Activated naive CD4-positive, alpha-beta T cell treated with anti-CD3 and anti-CD28 coated beads for 36 hours (primary cell): ENCODE measurements at regions of chr20 and their contacts with region 1.

Region 1: GRCh38 chr20:35329435-35330139 is 37.4 kb upstream of the FAM83C start:
- DNase-seq: peak; percentile 81
- H3K4me3 Mint-ChIP-seq: no peak overlapping the region
- H3K27ac Mint-ChIP-seq: no peak overlapping the region
- H3K4me1 Mint-ChIP-seq: peaks cover 42% of the 10 kb centered on the region
- H3K27me3 Mint-ChIP-seq: no peaks in the 10 kb centered on the region

Region 2: GRCh38 chr20:35166242-35166830 is 163.3 kb before region 1 on chr20:
- CTCF ChIA-PET with region 1: no interaction called
- intact Hi-C with region 1: no loop called
- DNase-seq: no peak
- H3K4me3 Mint-ChIP-seq: no peak overlapping the region
- H3K27ac Mint-ChIP-seq: no peak overlapping the region
- H3K4me1 Mint-ChIP-seq: peaks cover 10% of the 10 kb centered on the region
- H3K27me3 Mint-ChIP-seq: no peaks in the 10 kb centered on the region

Region 3: DNA sequence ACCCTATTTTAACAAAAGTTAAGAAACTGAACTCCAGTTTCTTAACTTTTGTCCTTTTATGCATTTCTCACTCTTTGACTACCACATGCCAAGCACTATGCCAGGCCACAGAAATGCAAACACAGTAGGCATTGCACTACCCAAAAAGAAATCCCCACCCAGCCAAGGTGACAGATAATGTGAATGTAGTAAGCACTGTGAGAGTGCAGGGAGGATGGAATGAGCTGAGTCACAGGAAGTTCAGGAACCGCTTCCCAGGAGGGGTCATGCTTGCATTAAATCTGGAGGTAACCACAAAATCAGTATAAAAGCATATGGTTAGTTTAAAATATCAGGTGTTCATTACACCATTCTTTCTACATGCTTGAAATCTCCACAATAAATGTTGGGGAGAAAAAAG is 17.2 kb before region 1 on chr20:
- CTCF ChIA-PET with region 1: interaction called, 101 read pairs
- intact Hi-C with region 1: loop called (anchors 1 kb)
- DNase-seq: peak; percentile 69
- H3K4me3 Mint-ChIP-seq: no peak overlapping the region
- H3K27ac Mint-ChIP-seq: peak overlapping the region; percentile 80
- H3K4me1 Mint-ChIP-seq: peaks cover 52% of the 10 kb centered on the region
- H3K27me3 Mint-ChIP-seq: no peaks in the 10 kb centered on the region

Region 4: GRCh38 chr20:35490736-35491181 is 161.2 kb after region 1 on chr20:
- CTCF ChIA-PET with region 1: no interaction called
- intact Hi-C with region 1: no loop called
- DNase-seq: peak; percentile 80
- H3K4me3 Mint-ChIP-seq: peak overlapping the region; percentile 98
- H3K27ac Mint-ChIP-seq: peak overlapping the region; percentile 97
- H3K4me1 Mint-ChIP-seq: peaks cover 42% of the 10 kb centered on the region
- H3K27me3 Mint-ChIP-seq: no peaks in the 10 kb centered on the region

Region 5: DNA sequence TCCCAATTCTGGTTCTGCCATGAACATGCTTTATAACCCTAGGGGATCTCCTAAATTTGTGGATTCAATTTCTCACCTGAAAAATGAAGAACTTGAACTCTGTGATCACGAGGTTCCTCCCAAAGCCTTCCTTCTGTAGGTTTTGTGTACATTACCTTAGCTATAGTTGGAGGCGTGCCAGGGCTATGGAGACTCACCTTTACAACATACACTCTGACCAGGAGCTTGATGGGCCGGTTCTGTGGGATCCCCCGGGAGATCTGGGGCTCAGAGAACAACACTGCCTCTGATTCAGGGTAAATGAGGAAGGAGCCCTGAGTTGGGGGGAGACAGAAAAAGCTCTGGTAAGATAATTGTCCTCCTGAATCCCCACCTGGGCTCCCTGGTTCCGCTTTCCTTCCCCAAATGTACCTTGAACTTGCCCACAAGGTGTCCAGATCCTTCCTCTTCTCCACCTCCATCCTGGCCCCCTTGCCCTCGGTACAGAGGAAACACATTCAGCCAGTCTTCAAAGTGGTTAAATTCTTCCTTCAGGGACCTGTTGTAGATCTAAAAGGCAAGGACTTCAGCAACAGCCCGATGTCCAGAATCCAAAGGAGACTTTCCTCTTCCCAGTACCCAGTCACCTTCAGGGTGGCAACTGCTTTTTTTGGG is 246.5 kb after region 1 on chr20:
- CTCF ChIA-PET with region 1: no interaction called
- intact Hi-C with region 1: no loop called
- DNase-seq: no peak
- H3K4me3 Mint-ChIP-seq: no peak overlapping the region
- H3K27ac Mint-ChIP-seq: no peak overlapping the region
- H3K4me1 Mint-ChIP-seq: no peaks in the 10 kb centered on the region
- H3K27me3 Mint-ChIP-seq: peaks cover 2% of the 10 kb centered on the region

Region 6: DNA sequence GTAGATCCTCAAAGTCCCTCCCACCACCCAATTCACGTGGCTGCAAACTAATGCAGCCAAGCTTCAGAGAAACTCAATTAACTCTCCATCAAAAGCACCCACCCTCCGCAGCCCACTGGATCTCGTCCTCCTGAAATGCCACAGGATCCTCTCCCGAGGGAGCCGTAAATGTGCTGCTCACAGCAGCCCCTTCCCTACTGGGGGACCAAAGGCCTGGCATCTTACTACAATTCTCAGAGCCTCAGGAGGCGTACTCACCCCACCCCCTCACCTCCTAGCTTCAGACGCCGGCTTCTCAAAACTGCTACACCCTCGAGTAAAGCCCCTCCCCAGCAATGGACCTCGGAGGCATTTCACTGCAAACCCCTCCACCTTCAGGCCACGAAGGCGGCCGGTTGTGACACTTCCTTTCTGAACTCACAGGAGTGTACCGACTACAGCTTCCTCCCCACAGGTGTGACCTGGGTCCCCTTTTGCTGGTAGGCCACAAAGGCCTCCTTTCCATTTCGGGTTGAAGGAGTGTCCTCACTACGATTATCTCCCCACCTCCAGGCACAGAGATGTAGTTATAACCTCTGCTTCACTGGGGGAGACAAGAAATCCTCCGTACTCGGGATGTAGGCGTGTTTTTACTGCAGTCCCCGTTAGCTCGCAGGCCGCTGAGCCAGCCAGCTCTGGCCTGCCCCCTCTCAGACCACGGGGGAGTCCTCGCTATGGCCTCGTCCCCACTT is 334.4 kb after region 1 on chr20:
- CTCF ChIA-PET with region 1: no interaction called
- intact Hi-C with region 1: no loop called
- DNase-seq: peak; percentile 76
- H3K4me3 Mint-ChIP-seq: peak overlapping the region; percentile 95
- H3K27ac Mint-ChIP-seq: peak overlapping the region; percentile 99
- H3K4me1 Mint-ChIP-seq: peaks cover 41% of the 10 kb centered on the region
- H3K27me3 Mint-ChIP-seq: no peaks in the 10 kb centered on the region